Common myeloid progenitor, CD34-positive (primary cell): ENCODE measurements at regions of chr2 and their contacts with region 1.

Region 1: DNA sequence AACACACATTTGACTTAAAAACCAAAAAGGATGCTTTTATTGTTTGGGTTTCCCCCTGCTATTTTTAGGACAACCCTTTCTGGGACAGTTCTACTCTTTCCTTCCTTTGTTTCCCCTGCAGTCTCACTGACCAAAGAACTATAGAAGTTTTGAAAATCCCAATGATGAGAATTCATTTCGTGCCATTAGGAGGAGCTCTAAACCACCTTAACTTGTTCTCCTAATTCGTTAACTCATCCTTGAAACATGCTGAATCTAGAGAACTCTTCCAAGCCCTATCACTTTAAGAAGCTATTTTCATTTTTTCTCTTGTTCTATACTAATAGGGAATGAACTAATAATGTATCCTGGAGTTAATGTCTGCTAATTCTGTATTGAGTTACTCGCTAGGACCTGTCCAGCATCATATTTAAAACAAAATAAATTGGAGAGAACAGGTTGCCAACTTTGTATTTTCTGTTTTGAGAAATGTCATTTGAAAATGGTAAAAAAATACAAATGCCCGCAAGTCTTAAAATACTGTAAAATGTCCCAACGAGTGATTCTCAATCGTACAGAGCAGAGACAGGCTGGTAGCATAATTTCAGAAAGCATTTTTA is 62.9 kb downstream of the AFTPH start:
- DNase-seq: peak; percentile 65 to 81 (median 75)
- H3K4me3 ChIP-seq: no peak overlapping the region
- H3K27ac ChIP-seq: no peak overlapping the region
- H3K4me1 ChIP-seq: peaks cover 0 to 10% (median 0%) of the 10 kb centered on the region in 4 experiments
- H3K27me3 ChIP-seq: no peaks in the 10 kb centered on the region

Region 2: DNA sequence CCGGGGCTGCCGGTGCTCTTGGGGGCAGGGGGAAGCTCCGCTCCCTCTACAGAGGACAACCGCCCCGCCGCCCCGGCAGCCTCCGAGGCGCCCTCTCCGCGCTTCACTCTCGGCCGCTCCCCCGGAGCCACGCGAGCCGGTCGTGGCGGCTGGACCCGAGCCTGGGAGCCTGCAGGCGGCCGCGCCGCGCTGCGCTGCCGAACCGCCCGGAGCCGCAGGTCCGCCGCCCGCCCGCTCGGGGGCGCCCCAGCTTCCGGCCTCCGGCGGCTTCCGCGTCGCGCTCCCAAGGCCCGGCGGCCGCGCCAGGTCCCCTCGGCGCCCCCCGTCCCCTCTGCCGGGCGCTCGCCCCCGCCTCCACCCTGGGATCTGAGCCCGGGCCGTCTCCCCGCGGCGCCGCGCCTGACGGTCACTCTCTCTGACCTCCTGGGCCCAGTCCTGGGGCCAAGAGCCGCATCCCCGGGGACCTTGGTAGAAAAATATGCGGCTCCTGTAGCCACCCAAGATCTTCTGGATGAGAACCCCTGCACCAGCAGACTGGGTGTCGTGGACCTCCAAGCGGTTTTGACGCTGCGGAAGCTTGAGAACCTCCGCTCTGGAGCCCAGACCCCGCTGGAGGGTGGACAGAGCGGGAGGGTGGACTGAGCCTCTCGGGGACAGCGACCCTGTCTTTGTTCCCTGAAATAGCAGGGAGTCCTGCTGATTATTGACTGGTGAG is 22.4 kb after region 1 on chr2:
- CTCF ChIA-PET with region 1: interaction called, 61 read pairs
- POLR2A ChIA-PET with region 1: interaction called, 3 read pairs
- DNase-seq: peak; percentile 73 to 86 (median 84)
- H3K4me3 ChIP-seq: peak overlapping the region; percentile 32 to 86 (median 73)
- H3K27ac ChIP-seq: peak overlapping the region; percentile 77 to 85
- H3K4me1 ChIP-seq: peaks cover 10 to 38% (median 32%) of the 10 kb centered on the region in 4 experiments
- H3K27me3 ChIP-seq: no peaks in the 10 kb centered on the region

Region 3: GRCh38 chr2:64626963-64627760 is 40.2 kb after region 1 on chr2:
- CTCF ChIA-PET with region 1: interaction called, 10 read pairs
- POLR2A ChIA-PET with region 1: no interaction called
- DNase-seq: no peak
- H3K4me3 ChIP-seq: no peak overlapping the region
- H3K27ac ChIP-seq: no peak overlapping the region
- H3K4me1 ChIP-seq: no peaks in the 10 kb centered on the region
- H3K27me3 ChIP-seq: no peaks in the 10 kb centered on the region

Region 4: DNA sequence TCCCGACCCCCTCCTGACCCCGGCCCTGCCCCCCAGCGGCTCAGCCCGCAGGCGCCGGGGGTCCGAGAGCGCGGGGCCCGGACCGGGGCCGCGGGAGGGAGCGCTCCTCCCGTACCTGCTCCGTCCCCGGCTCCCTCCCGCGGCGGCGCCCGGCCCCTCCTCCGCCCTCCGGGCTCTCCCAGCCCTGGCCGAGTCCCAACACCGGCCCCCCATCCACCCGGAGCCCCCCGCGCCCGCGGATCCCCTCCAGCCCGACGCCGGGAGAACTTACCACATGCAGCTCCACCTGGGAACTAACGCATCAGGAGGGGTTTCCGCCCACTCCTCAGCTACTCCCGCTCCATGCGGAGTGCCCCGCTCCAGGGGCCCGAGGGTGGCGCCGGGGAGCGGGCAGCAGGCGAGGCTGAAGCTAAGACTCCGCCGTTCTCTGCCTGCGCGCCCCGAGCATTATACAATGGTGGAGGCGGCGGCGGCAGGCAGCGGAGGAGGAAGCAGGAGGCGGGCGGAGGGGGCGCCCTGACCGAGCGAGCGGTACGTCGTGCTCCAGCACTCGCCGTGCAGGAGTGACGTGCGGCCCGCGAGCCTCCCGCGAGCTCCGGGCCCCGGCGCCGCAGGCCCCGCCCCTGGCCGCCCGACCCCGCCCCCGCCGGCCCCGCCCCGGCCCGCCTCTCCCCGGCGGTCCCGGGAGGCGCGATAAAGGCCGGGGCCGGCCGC is 66.5 kb after region 1 on chr2 and contains the start of gene SERTAD2:
- CTCF ChIA-PET with region 1: interaction called, 10 read pairs
- POLR2A ChIA-PET with region 1: no interaction called
- DNase-seq: peak; percentile 91 to 95 (median 93)
- H3K4me3 ChIP-seq: peak within 1 kb of the TSS; percentile 84 to 96 (median 90)
- H3K27ac ChIP-seq: peak within 1 kb of the TSS; percentile 81 to 93
- H3K4me1 ChIP-seq: peaks cover 45 to 84% (median 73%) of the 10 kb centered on the region in 4 experiments
- H3K27me3 ChIP-seq: no peaks in the 10 kb centered on the region

Region 5: DNA sequence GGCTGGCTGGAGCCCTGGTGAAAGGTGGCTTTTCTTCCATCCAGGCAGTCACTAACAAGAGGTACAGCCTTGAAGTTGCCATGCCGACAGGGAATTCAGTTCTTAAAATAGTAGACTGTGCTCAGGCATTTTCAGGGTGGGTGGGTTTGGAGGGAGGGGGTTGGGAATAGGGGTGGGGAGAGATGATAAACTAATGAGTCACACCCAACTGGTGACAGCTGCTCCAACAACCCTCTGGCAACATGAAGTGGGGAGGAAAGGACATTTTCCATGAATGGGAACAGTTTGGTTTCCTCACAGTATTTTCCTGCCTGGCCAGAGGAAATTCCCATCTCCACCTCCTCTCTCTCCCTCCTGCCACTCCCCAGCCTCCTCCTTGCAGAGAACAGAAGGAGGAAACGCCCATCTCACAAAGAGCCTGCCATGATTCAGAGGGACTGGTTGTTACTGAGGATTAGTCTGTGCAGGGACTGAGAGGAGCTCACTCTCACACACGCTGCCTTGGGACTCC is 289.2 kb after region 1 on chr2:
- CTCF ChIA-PET with region 1: interaction called, 17 read pairs
- POLR2A ChIA-PET with region 1: no interaction called
- DNase-seq: no peak
- H3K4me3 ChIP-seq: no peak overlapping the region
- H3K27ac ChIP-seq: no peak overlapping the region
- H3K4me1 ChIP-seq: peaks cover 0 to 10% (median 2%) of the 10 kb centered on the region in 4 experiments
- H3K27me3 ChIP-seq: no peaks in the 10 kb centered on the region